Right ventricle myocardium superior (tissue), 1 donor: ENCODE measurements at regions of chr22 and their contacts with region 1.

Region 1: DNA sequence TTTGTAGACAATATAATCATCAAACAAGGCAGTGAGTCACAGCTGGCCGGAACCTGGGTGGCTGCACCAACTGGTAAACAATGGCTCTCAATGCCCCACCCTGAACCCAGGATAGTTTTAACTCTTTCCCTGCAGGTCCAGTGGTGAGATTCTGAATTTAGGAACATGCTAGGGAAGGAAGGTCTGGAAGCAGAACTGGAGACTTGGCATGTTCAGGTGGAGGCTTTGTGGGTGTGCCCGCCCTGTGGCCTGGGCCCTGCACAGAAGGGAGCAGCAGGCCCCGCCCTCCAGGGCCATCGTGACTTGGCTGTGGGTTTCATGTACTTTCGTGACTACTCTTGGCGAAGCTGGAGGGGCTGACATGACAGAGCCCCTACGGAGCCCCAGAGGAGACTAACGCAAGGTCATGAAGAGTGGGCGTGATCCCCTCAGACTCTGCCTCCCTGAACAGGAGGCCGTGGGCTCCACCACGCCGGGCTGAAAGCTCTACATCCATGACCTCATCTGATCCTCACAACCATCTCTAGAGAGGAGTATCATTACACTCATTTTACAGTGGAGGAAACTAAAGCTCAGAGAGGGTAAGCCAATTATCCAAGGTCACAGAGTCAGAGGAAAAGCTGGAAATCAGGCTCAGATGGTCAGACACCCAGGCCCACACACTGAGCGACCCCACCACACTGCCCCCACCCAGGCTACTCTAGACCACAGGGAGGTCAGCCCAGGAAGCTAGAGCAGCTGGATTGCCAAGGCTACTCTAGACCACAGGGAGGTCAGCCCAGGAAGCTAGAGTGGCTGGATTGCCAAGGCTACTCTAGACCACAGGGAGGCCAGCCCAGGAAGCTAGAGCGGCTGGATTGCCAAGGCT is 27.3 kb downstream of the MAFF start:
- DNase-seq: peak; percentile 71
- ATAC-seq: peak; percentile 36

Region 2: DNA sequence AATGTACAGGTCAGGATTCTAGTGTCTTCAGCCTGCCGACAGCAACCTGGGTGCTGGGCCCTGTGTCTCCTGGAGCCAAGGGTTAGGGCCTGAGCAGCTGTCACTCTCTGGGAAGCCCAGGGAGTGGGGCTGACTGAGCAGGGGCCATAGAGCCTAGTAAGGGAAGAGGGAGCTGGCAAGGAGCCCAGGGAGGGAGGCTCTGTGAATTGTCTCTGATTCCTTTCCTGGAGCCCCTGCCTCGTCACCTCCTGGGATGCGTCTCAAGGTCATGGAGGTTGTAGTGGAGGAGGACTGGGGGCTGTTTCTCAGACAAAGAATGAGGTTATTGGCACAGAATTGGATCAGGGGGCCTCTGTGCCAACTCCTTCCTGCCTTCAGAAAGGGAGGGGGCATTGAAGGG is 256.6 kb before region 1 on chr22:
- intact Hi-C with region 1: no loop called
- DNase-seq: no peak
- ATAC-seq: no peak

Region 3: GRCh38 chr22:38205261-38206128 is 23.6 kb before region 1 on chr22:
- intact Hi-C with region 1: loop called (anchors 2 kb)
- DNase-seq: peak; percentile 90
- ATAC-seq: peak; percentile 41